Common myeloid progenitor, CD34-positive (primary cell): ENCODE measurements at regions of chr21 and their contacts with region 1.

Region 1: GRCh38 chr21:17585875-17586450 is 26.7 kb downstream of the BTG3 start:
- DNase-seq: peak; percentile 53 to 80 (median 72)
- H3K4me3 ChIP-seq: no peak overlapping the region
- H3K27ac ChIP-seq: no peak overlapping the region
- H3K4me1 ChIP-seq: no peaks in the 10 kb centered on the region
- H3K27me3 ChIP-seq: no peaks in the 10 kb centered on the region

Region 2: DNA sequence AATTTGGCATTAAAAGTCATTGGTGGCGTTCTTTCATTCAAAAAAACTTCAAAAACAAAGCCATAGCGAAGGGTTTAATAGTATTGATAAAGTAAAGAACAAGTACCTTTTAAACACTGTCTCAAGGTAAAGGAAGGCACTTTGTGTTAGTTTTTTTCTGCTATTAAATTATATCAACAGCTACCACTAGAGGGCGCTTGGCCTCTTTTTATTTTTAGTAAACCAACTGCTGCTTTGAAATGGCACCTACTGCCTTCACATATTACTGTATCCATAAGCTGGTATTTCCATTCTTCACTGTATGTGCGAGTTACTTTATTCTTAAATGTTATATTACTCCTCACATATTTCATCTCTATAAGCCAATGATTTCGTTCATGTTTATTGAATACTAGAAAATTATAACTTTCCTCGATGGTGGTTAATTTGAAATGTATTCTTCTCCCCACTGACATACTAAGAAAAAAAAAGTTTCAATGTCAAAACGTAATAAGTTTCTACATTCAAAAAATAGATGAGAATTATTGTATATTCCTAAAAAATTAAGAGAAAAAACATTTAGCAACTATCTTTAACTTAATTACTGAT is 198.8 kb before region 1 on chr21:
- CTCF ChIA-PET with region 1: interaction called, 107 read pairs
- POLR2A ChIA-PET with region 1: no interaction called
- DNase-seq: peak; percentile 63 to 77 (median 68)
- H3K4me3 ChIP-seq: no peak overlapping the region
- H3K27ac ChIP-seq: no peak overlapping the region
- H3K4me1 ChIP-seq: no peaks in the 10 kb centered on the region
- H3K27me3 ChIP-seq: peaks cover 0 to 3% (median 0%) of the 10 kb centered on the region in 5 experiments

Region 3: DNA sequence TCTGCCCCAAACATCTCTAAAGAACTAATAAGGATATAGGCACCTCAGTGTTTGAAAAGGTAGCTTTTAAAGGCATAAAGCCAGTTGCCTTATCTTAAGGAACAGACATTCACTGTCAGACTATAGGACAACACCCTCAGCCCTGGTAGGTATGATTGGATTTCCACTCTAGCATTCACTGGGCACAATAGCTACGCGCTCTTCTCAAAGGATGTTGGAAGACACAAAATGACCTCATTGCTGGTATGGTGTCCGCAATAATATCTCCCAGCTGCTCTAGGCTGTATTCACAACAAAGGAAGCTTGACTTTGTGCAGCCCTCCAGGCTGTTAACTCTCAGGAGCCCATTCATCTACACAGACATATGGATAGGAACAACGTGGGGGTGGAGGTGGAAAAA is 192.6 kb before region 1 on chr21:
- CTCF ChIA-PET with region 1: interaction called, 107 read pairs
- POLR2A ChIA-PET with region 1: no interaction called
- DNase-seq: peak in 2 of 3 donors; percentile 4 to 44
- H3K4me3 ChIP-seq: no peak overlapping the region
- H3K27ac ChIP-seq: no peak overlapping the region
- H3K4me1 ChIP-seq: no peaks in the 10 kb centered on the region
- H3K27me3 ChIP-seq: no peaks in the 10 kb centered on the region